HepG2 (cell line): ENCODE measurements at regions of chr10 and their contacts with region 1.

Region 1: DNA sequence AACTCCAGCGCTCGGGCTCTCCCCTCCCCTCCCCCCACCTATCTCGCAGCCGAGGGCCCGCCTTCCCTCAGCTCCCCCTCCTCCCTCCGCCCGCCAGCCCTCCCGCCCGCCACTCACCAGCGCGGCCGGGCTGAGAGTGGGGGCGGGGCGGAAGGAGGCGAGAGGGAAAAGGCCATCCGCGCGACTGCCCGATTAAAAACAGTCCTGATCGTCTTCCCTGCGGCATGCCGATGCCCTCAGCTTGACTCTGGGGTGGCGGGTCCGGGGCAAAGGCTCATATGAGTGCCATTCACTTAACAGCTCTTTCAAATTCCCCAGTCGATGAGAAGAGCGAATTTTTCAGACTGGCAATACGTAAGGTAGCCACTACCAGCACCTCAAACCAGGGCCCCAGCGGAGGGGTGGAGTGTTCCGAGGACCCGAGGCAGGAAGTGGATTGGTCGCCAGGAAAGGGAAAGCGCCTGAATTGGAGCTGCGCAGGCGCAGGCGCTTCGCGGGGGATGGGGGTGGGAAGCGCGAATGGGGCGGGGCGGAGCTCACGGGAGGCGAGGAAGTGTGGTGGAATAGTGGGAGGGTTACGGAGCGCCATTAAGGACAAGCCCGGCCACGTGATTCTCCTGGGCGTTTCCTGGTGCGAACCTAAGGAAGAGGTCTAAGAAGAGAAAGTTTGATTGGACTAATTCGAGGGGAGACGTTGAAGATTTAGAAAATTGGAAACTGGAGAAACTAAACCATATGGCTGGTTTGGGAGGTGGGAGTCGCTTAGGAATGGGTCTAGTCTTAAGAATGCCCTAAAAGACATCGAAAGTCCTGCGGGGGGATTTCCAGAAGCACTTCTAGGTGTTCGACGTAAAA is at the start of gene UPF2:
- DNase-seq: peak; percentile 96
- ATAC-seq: peak; percentile 90
- H3K4me3 ChIP-seq: peak within 1 kb of the TSS; percentile 77 to 96 (median 95)
- H3K27ac ChIP-seq: peak within 1 kb of the TSS; percentile 99
- H3K4me1 ChIP-seq: peaks cover 35% of the 10 kb centered on the region
- H3K27me3 ChIP-seq: no peaks in the 10 kb centered on the region; a peak in 1 of 5 replicates
- CTCF ChIP-seq: no peak
- EP300 ChIP-seq: 0 out of 4 replicates have a peak, but pooled peaks of 1 of the 2 experiments have one; percentile 2
- POLR2A ChIP-seq: peak; percentile 48 to 59; a peak in 3 of 4 replicates
- RAD21 ChIP-seq: no peak
- total RNA-seq, gene UPF2: 14.5 and 21.8 TPM in 2 replicates

Region 2: DNA sequence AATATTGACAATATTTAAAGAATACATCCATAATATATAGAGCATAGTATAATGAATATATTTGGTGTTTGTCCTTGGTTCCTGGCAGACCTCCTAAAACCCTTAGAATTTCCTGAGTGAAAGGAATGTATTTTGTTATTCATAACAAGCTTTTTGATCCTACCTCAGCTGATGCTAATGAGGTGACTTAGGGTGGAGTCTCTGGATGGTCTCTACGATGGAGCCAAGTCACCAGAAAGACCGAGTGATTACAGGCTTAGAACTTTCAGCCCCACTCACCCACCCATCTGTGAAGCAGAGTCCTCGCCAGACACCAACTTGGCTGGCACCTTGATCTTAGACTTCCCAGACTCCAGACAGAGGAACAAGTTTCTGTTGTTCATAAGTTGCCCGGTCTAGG is 36.4 kb before region 1 on chr10:
- CTCF ChIA-PET with region 1: no interaction called
- POLR2A ChIA-PET with region 1: no interaction called
- in situ Hi-C with region 1: no loop called
- intact Hi-C with region 1: no loop called
- DNase-seq: no peak
- ATAC-seq: no peak
- H3K4me3 ChIP-seq: no peak overlapping the region
- H3K27ac ChIP-seq: no peak overlapping the region
- H3K4me1 ChIP-seq: no peaks in the 10 kb centered on the region
- H3K27me3 ChIP-seq: no peaks in the 10 kb centered on the region
- CTCF ChIP-seq: no peak
- EP300 ChIP-seq: no peak
- POLR2A ChIP-seq: no peak
- RAD21 ChIP-seq: no peak

Region 3: DNA sequence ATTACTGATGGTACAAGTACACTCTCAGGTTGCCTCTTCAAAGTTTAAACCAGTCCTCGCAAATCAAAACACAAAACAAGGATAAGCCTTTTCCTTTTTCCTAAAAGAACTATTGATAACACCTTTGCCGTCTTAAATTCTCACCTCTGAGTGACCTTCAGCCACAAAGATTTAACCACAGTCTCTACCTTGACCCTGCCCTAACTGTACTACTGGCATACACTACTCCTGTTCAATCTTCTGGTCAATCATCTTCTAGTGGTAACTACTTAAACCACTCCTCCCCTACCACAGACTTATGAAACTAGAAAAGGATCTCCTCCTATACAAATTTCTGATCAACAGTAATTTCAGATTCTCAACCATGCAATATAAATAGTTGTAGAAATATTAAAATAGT is 15.5 kb before region 1 on chr10:
- CTCF ChIA-PET with region 1: no interaction called
- POLR2A ChIA-PET with region 1: interaction called, 10 read pairs
- in situ Hi-C with region 1: no loop called
- intact Hi-C with region 1: no loop called
- DNase-seq: no peak
- ATAC-seq: no peak
- H3K4me3 ChIP-seq: no peak overlapping the region
- H3K27ac ChIP-seq: no peak overlapping the region
- H3K4me1 ChIP-seq: 0 out of 2 replicates have a peak, but pooled peaks cover 5% of the 10 kb centered on the region
- H3K27me3 ChIP-seq: no peaks in the 10 kb centered on the region
- CTCF ChIP-seq: no peak
- EP300 ChIP-seq: no peak
- POLR2A ChIP-seq: no peak
- RAD21 ChIP-seq: no peak

Region 4: DNA sequence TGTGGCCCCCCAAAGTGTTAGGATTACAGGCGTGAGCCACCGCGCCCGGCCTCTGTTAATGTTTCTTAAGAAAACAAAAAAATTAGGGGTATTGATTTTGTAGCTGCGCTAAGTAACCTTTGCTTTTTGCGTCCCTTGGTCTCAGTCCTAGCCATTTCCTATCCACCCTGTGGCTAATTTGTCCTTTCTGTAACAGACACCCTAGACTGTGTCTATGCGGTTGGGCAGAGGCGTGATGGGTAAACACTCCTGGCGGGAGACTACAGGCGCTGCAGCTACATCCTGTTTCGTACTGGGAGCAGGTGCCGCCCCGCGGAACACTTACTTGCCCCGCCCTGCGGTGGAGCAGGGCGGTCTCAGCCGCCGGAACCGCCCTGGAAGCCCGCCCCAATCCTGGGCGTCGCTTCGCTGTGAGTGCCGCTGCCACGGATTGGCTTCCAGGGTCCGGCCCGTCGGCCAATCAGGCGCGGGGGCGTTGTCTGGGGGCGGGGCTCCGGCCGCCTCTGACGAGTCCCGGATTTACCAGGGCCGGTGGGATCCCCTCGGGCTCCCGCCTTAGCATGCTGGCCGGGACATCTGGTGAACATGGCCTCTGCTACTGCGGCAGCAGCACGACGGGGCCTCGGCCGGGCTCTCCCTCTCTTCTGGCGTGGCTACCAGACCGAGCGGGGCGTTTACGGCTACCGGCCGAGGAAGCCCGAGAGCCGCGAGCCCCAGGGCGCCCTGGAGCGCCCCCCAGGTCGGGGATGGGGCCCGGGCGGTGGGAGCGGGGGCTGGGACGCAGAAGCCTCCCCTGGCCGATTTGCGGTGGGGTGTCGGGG is 25.6 kb after region 1 on chr10 and contains the start of gene DHTKD1:
- CTCF ChIA-PET with region 1: no interaction called
- POLR2A ChIA-PET with region 1: interaction called, 43 read pairs
- in situ Hi-C with region 1: no loop called
- intact Hi-C with region 1: loop called (anchors 1 kb)
- DNase-seq: peak; percentile 95
- ATAC-seq: peak; percentile 98
- H3K4me3 ChIP-seq: peak within 1 kb of the TSS; percentile 83 to 94 (median 84)
- H3K27ac ChIP-seq: peak within 1 kb of the TSS; percentile 82
- H3K4me1 ChIP-seq: peaks cover 40% of the 10 kb centered on the region
- H3K27me3 ChIP-seq: no peaks in the 10 kb centered on the region
- CTCF ChIP-seq: peak; percentile 43; the same call in 1 of the 2 replicates
- EP300 ChIP-seq: peak in 1 of 2 experiments; percentile 30; a peak in 1 of 4 replicates
- POLR2A ChIP-seq: peak; percentile 73 to 84
- RAD21 ChIP-seq: no peak; the same call in none of the 2 replicates
- total RNA-seq, gene DHTKD1: 9.6 and 10.7 TPM in 2 replicates

Region 5: DNA sequence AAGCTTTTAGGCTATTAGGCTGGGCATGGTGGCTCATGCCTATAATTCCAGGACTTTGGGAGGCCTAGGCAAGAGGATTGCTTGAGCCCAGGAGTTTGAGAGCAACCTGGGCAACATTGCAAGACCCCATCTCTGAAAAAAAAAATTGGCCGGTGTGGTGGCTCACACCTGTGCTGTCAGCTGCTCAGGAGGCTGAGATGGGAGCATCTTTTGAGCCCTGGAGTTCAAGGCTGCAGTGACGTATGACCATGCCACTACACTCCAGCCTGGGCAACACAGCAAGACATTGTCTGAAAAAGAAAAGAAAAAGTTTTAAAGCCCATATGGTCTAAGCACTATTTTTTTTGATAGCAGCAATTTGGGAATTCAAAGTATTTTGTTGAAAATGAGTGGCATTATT is 70.6 kb after region 1 on chr10:
- CTCF ChIA-PET with region 1: no interaction called
- POLR2A ChIA-PET with region 1: no interaction called
- in situ Hi-C with region 1: no loop called
- intact Hi-C with region 1: no loop called
- DNase-seq: no peak
- ATAC-seq: no peak
- H3K4me3 ChIP-seq: no peak overlapping the region
- H3K27ac ChIP-seq: no peak overlapping the region
- H3K4me1 ChIP-seq: no peaks in the 10 kb centered on the region
- H3K27me3 ChIP-seq: no peaks in the 10 kb centered on the region
- CTCF ChIP-seq: no peak
- EP300 ChIP-seq: no peak
- POLR2A ChIP-seq: no peak
- RAD21 ChIP-seq: no peak

Region 6: DNA sequence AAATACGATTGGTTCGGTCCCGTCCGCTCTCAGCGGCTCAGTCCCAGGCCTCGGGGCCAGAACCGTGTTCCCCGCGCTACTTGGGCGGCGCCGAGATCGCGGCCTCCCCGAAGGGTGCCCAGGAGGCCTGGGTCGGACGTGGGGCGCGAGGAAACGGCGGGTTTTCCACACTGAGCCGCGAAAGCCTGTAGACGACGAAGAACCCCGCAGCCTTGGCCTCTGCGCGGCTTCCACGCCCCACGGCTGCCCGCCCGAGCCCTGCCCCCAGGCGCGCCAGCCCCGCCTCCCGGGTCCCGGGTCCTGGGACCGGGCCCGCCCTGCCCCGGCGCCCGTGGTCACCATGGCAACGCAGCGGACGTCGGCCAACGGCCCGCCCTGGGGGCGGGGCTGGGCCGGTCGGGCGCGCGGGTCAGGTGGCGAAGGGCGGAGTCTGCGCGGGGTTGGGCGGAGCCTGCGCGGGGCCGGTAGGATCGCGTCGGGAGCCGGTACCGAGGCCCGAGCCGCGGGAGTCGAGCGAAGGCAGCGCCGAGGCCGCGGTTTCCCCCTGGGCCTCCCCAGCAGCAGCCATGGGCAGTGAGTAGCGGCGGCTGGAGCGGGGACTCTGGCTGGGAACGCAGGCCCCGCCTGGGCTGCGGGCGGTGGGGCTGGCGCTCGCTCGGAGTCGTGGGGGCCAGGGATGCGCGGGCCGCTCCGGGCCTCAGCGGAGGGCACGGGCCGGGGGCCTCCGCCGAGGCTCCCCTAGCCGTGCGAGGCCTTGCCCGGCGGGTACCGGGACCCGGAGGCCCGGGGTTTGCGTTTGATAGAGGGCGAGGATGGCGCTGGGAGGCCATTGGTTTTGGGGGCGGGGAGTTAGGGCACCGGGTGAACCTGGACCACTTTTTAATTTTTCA is 86.4 kb after region 1 on chr10 and contains the start of gene SEC61A2:
- CTCF ChIA-PET with region 1: no interaction called
- POLR2A ChIA-PET with region 1: no interaction called
- in situ Hi-C with region 1: no loop called
- intact Hi-C with region 1: loop called (anchors 5 kb)
- DNase-seq: peak; percentile 77
- ATAC-seq: peak; percentile 92
- H3K4me3 ChIP-seq: peak within 1 kb of the TSS; percentile 82 to 99 (median 87)
- H3K27ac ChIP-seq: peak within 1 kb of the TSS; percentile 93
- H3K4me1 ChIP-seq: peaks cover 19% of the 10 kb centered on the region
- H3K27me3 ChIP-seq: no peaks in the 10 kb centered on the region
- CTCF ChIP-seq: no peak
- EP300 ChIP-seq: no peak
- POLR2A ChIP-seq: peak; percentile 82 to 90
- RAD21 ChIP-seq: peak; percentile 30; the same call in 1 of the 2 replicates
- total RNA-seq, gene SEC61A2: 4.5 and 7.4 TPM in 2 replicates

Region 7: GRCh38 chr10:12177642-12178041 is 134.6 kb after region 1 on chr10:
- CTCF ChIA-PET with region 1: no interaction called
- POLR2A ChIA-PET with region 1: no interaction called
- in situ Hi-C with region 1: no loop called
- intact Hi-C with region 1: no loop called
- DNase-seq: no peak
- ATAC-seq: no peak
- H3K4me3 ChIP-seq: no peak overlapping the region
- H3K27ac ChIP-seq: no peak overlapping the region
- H3K4me1 ChIP-seq: no peaks in the 10 kb centered on the region
- H3K27me3 ChIP-seq: no peaks in the 10 kb centered on the region; a peak in 1 of 5 replicates
- CTCF ChIP-seq: no peak
- EP300 ChIP-seq: no peak
- POLR2A ChIP-seq: no peak
- RAD21 ChIP-seq: no peak

Region 8: DNA sequence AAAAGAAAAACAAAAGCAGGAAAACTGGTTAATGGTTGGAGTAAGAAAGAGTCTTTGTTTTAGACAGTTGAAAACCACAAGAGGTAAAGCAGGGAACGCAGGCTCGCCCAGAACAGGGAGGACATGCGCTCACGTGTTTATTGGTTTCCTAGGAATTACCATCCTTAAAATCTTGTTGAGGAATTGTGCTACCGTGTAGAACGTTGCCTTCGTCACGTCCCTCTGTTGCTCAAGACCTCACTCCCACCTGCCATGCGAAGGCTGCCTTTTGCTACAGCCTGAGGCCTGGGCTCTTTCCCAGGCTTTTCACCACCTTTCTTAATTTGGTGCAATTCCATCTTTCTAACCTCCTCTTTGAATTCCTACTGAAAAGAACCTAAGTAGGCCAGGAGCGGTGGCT is 244.7 kb after region 1 on chr10:
- CTCF ChIA-PET with region 1: no interaction called
- POLR2A ChIA-PET with region 1: no interaction called
- in situ Hi-C with region 1: no loop called
- intact Hi-C with region 1: no loop called
- DNase-seq: no peak
- ATAC-seq: no peak
- H3K4me3 ChIP-seq: no peak overlapping the region
- H3K27ac ChIP-seq: no peak overlapping the region
- H3K4me1 ChIP-seq: peaks cover 8% of the 10 kb centered on the region; the same call in 1 of the 2 replicates
- H3K27me3 ChIP-seq: no peaks in the 10 kb centered on the region
- CTCF ChIP-seq: no peak
- EP300 ChIP-seq: no peak
- POLR2A ChIP-seq: no peak
- RAD21 ChIP-seq: no peak